ENCODE measurements at regions of chr12 and their contacts with region 1.

Region 1: DNA sequence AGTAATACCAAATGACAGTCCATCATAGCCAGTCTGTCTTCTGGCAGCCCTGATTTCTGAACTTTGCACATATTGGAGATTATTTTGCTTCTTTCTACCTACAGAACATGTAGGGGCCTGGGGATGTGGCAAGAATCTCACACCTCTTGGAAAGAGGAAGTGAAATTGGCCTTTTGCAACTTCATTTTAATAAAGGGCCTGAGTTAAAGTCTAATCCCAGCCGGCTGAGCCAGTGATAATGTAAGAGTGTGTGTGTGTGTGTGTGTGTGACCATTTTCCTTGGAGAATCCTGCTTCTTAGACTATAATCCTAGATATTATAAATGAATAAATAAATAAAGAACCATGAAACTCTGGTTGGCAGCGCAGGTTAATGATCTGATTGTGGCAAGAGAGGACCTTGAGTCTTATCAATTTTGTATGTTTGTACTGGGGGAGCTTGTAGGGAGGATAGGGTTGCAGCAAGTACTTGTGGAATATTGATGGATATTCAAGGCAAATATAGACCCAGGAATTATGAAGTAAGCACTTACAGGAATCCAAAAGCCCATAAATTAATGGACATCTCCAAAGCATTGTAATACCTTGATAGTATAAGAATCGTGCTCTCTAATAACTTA is 233.2 kb upstream of the AMIGO2 start:
- DNase-seq: no peak
- ATAC-seq: peak; percentile 82
- H3K4me3 Mint-ChIP-seq: peak overlapping the region; percentile 29
- H3K27ac Mint-ChIP-seq: peak overlapping the region; percentile 88
- H3K4me1 Mint-ChIP-seq: peaks cover 77% of the 10 kb centered on the region
- H3K27me3 Mint-ChIP-seq: no peaks in the 10 kb centered on the region
- CTCF ChIP-seq: no peak

Region 2: DNA sequence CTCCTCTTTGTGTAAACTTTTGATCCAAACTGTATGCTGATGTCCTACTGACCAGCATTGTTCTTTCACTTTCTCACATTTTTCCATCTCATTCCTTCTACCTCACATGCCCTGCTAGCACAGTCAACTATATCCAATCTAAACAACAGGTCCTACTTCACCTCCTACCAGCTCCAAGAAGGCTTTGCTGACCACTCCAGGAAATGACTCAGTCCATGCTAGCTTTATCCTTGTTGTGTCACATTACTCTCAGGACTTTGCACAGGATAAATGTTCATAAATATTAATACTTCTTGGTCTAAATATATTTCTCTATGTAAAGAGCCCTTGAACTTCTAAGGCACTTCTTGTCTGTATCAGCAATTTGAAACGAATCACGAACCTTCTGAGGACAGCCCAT is 298.4 kb before region 1 on chr12:
- CTCF ChIA-PET with region 1: no interaction called
- POLR2A ChIA-PET with region 1: no interaction called
- intact Hi-C with region 1: no loop called
- DNase-seq: no peak
- ATAC-seq: no peak
- H3K4me3 Mint-ChIP-seq: no peak overlapping the region
- H3K27ac Mint-ChIP-seq: no peak overlapping the region
- H3K4me1 Mint-ChIP-seq: no peaks in the 10 kb centered on the region
- H3K27me3 Mint-ChIP-seq: peaks cover 4% of the 10 kb centered on the region
- CTCF ChIP-seq: no peak

Region 3: DNA sequence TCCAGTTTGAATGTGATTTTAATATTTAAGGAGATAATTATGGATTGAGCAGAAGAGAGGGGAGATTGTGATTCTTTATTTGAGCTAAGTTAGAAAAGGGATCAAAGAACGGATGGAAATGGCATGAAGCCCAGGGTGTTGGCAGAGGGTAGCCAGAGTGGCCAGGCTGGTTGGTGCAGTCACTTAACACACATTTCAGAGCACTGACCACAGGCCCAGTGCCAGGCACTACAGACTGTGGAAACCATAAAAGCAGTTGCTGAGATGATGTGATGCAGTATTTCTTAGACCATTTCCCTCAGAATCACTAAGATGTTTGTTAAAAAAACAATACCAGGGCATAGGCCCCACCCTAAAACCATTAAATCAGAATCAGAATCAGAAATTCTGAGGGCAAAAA is 65.5 kb before region 1 on chr12:
- CTCF ChIA-PET with region 1: no interaction called
- POLR2A ChIA-PET with region 1: no interaction called
- intact Hi-C with region 1: no loop called
- DNase-seq: no peak
- ATAC-seq: no peak
- H3K4me3 Mint-ChIP-seq: no peak overlapping the region
- H3K27ac Mint-ChIP-seq: no peak overlapping the region
- H3K4me1 Mint-ChIP-seq: peaks cover 2% of the 10 kb centered on the region
- H3K27me3 Mint-ChIP-seq: no peaks in the 10 kb centered on the region
- CTCF ChIP-seq: no peak

Region 4: GRCh38 chr12:47328831-47329545 is 16.1 kb after region 1 on chr12:
- CTCF ChIA-PET with region 1: no interaction called
- POLR2A ChIA-PET with region 1: interaction called, 5 read pairs
- intact Hi-C with region 1: loop called (anchors 2 kb)
- DNase-seq: no peak
- ATAC-seq: no peak
- H3K4me3 Mint-ChIP-seq: no peak overlapping the region
- H3K27ac Mint-ChIP-seq: no peak overlapping the region
- H3K4me1 Mint-ChIP-seq: peaks cover 14% of the 10 kb centered on the region
- H3K27me3 Mint-ChIP-seq: no peaks in the 10 kb centered on the region
- CTCF ChIP-seq: no peak

Region 5: DNA sequence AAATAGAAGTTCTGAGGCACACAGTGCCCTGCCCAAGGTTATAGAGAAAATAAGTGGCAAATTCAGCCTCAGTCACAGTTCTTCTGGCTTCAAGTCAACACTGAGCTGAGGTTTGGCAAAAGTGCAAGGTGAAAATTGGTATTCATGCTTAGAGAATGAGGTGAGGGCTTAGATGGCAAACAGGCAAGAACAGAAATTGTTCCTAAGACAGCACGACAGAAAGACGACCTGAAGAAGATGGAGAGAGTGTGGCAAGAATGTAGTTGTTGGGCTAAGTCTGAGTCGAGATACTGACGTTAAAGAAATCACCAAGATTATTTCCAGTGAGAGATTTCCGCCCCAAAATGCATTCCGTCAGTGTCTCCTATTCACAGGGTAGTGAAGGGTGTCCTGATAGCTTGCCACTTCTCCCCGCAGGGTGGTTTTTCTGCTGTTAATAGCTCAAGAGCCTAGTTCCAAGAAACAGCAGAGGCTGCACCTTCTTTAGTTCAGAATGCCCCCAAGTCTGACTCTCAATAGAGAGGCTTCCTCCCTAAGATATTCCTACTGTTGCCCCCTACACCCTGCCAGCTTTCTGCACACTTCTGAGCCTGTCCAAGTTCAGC is 27.6 kb after region 1 on chr12:
- CTCF ChIA-PET with region 1: no interaction called
- POLR2A ChIA-PET with region 1: no interaction called
- intact Hi-C with region 1: loop called (anchors 2 kb)
- DNase-seq: no peak
- ATAC-seq: no peak
- H3K4me3 Mint-ChIP-seq: no peak overlapping the region
- H3K27ac Mint-ChIP-seq: no peak overlapping the region
- H3K4me1 Mint-ChIP-seq: peaks cover 9% of the 10 kb centered on the region
- H3K27me3 Mint-ChIP-seq: no peaks in the 10 kb centered on the region
- CTCF ChIP-seq: no peak

Region 6: DNA sequence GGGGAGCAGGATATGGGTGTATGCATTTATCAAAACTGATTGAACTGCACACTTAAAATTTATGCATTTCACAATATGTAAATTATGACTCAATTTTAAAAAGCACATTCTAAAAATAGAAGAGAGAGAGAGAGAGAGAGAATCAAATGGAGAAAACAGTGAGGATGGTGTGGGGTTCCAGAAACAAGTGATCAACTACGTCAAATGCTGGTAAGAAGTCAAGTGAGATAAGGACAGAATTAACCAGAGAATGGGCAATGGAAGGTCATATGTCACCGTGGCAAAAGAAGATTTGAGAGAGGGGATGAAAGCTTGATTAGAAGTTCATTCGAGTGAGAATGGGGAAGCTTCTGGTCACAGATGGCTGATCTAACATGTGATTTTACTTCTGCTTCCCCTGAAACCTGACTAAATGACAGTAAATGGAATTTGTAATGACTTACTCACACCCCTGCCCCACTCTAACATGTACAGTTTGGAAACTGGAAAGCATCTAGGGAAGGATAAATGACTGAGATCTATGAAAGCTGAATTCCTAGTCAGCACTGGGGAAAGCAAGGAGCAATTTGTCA is 43.3 kb after region 1 on chr12:
- CTCF ChIA-PET with region 1: interaction called, 4 read pairs
- POLR2A ChIA-PET with region 1: interaction called, 33 read pairs
- intact Hi-C with region 1: no loop called
- DNase-seq: no peak
- ATAC-seq: peak; percentile 77
- H3K4me3 Mint-ChIP-seq: peak overlapping the region; percentile 51
- H3K27ac Mint-ChIP-seq: peak overlapping the region; percentile 97
- H3K4me1 Mint-ChIP-seq: peaks cover 85% of the 10 kb centered on the region
- H3K27me3 Mint-ChIP-seq: no peaks in the 10 kb centered on the region
- CTCF ChIP-seq: no peak

Region 7: DNA sequence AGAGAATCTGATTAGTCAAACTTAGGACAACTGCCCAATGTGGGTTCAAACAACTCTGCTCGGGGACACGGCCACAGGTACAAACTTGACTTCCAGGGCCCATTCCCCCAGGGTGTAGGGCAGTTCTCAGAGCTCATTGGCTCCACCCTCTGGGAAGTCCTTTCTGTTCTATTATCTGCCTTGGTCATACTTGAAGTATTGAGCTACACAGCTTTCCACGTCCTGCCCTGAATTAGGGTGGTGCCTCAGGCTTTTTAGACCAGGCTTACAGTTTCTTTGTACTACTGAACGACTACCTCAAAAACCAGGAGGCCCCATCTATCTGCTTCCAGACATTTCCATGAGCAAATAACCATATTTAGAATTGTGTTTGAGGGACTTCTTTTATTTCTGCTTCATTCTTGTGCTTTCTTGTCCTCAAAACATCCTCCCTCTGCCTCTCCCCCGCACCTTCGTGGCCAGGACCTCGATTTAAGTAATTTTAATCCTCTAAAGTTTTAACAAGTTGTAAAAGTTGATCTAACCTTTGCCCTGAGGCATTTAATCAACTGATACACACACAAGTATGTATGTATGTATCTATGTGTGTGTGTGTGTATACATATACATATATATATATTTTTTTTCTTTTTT is 48.6 kb after region 1 on chr12:
- CTCF ChIA-PET with region 1: interaction called, 4 read pairs
- POLR2A ChIA-PET with region 1: interaction called, 33 read pairs
- intact Hi-C with region 1: no loop called
- DNase-seq: no peak
- ATAC-seq: peak; percentile 68
- H3K4me3 Mint-ChIP-seq: peak overlapping the region; percentile 74
- H3K27ac Mint-ChIP-seq: peak overlapping the region; percentile 94
- H3K4me1 Mint-ChIP-seq: peaks cover 63% of the 10 kb centered on the region
- H3K27me3 Mint-ChIP-seq: no peaks in the 10 kb centered on the region
- CTCF ChIP-seq: no peak